ENCODE measurements at regions of chr19 and their contacts with region 1.

Region 1: GRCh38 chr19:35462476-35462953 is 14.5 kb downstream of the FFAR2 start:
- DNase-seq: peak; percentile 88
- ATAC-seq: peak; percentile 78
- H3K4me3 ChIP-seq: peak overlapping the region in 3 of 5 experiments; percentile 1 to 24 (median 12)
- H3K4me3 Mint-ChIP-seq: peak overlapping the region; percentile 79
- H3K27ac ChIP-seq: peak overlapping the region; percentile 52 to 71
- H3K27ac Mint-ChIP-seq: peak overlapping the region; percentile 86
- H3K4me1 ChIP-seq: peaks cover 60 to 67% of the 10 kb centered on the region in 2 donors
- H3K4me1 Mint-ChIP-seq: peaks cover 62% of the 10 kb centered on the region
- H3K27me3 ChIP-seq: no peaks in the 10 kb centered on the region
- H3K27me3 Mint-ChIP-seq: no peaks in the 10 kb centered on the region
- CTCF ChIP-seq: no peak

Region 2: DNA sequence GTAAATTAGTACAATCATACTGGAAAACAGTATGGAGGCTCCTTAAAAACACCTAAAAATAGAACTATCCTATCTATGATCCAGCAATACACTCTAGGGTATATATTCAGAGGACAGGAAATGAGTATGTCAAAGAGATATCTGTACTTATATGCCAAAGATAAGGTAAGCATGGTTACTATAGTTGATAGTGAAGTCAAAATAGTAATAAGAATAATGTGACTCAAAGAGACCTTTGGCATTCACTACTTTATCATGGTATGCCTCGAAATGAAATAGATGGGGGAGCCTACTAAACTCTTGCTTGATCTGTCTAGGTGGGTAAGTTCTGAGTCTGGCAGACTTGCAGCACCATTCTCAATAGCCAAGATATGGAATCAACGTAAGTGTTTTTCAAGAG is 277.6 kb before region 1 on chr19:
- CTCF ChIA-PET with region 1: no interaction called
- POLR2A ChIA-PET with region 1: no interaction called
- intact Hi-C with region 1: no loop called
- DNase-seq: no peak
- ATAC-seq: no peak
- H3K4me3 ChIP-seq: no peak overlapping the region
- H3K4me3 Mint-ChIP-seq: no peak overlapping the region
- H3K27ac ChIP-seq: no peak overlapping the region
- H3K27ac Mint-ChIP-seq: no peak overlapping the region
- H3K4me1 ChIP-seq: no peaks in the 10 kb centered on the region
- H3K4me1 Mint-ChIP-seq: peaks cover under 1% of the 10 kb centered on the region
- H3K27me3 ChIP-seq: no peaks in the 10 kb centered on the region
- H3K27me3 Mint-ChIP-seq: no peaks in the 10 kb centered on the region
- CTCF ChIP-seq: no peak

Region 3: GRCh38 chr19:35357867-35358573 is 104.5 kb before region 1 on chr19 and contains the start of gene FFAR3:
- CTCF ChIA-PET with region 1: interaction called, 234 read pairs
- POLR2A ChIA-PET with region 1: interaction called, 3 read pairs
- intact Hi-C with region 1: no loop called
- DNase-seq: no peak
- ATAC-seq: no peak
- H3K4me3 ChIP-seq: no peak within 1 kb of the TSS
- H3K4me3 Mint-ChIP-seq: no peak within 1 kb of the TSS
- H3K27ac ChIP-seq: no peak within 1 kb of the TSS
- H3K27ac Mint-ChIP-seq: no peak within 1 kb of the TSS
- H3K4me1 ChIP-seq: peaks cover under 1 to 1% of the 10 kb centered on the region in 2 donors
- H3K4me1 Mint-ChIP-seq: peaks cover 3% of the 10 kb centered on the region
- H3K27me3 ChIP-seq: peaks cover 0 to 10% (median 0%) of the 10 kb centered on the region in 4 experiments
- H3K27me3 Mint-ChIP-seq: peaks cover 20% of the 10 kb centered on the region
- CTCF ChIP-seq: no peak
- total RNA-seq, gene FFAR3: not detected in 2 replicates

Region 4: GRCh38 chr19:35740423-35741202 is 278.1 kb after region 1 on chr19:
- CTCF ChIA-PET with region 1: no interaction called
- POLR2A ChIA-PET with region 1: no interaction called
- intact Hi-C with region 1: no loop called
- DNase-seq: peak; percentile 95
- ATAC-seq: peak; percentile 64
- H3K4me3 ChIP-seq: peak overlapping the region; percentile 60 to 93 (median 83)
- H3K4me3 Mint-ChIP-seq: peak overlapping the region; percentile 96
- H3K27ac ChIP-seq: peak overlapping the region; percentile 59 to 73
- H3K27ac Mint-ChIP-seq: peak overlapping the region; percentile 92
- H3K4me1 ChIP-seq: peaks cover 34 to 64% of the 10 kb centered on the region in 2 donors
- H3K4me1 Mint-ChIP-seq: peaks cover 57% of the 10 kb centered on the region
- H3K27me3 ChIP-seq: no peaks in the 10 kb centered on the region
- H3K27me3 Mint-ChIP-seq: no peaks in the 10 kb centered on the region
- CTCF ChIP-seq: no peak